Testis (tissue), 5 donors: ENCODE measurements at regions of chr1 and their contacts with region 1.

Region 1: GRCh38 chr1:225777583-225778336 is at the start of gene SRP9:
- DNase-seq: peak; percentile 99
- H3K4me3 ChIP-seq: peak within 1 kb of the TSS; percentile 87 to 89
- H3K27ac ChIP-seq: peak within 1 kb of the TSS; percentile 97 to 98
- H3K4me1 ChIP-seq: peaks cover 21% of the 10 kb centered on the region
- H3K27me3 ChIP-seq: no peaks in the 10 kb centered on the region
- CTCF ChIP-seq: peak; percentile 78 to 94 (median 90)
- POLR2A ChIP-seq: peak; percentile 57
- total RNA-seq, gene SRP9: 134 to 159 TPM

Region 2: GRCh38 chr1:225652729-225653462 is 124.9 kb before region 1 on chr1 and contains the start of gene ENAH:
- intact Hi-C with region 1: loop called (anchors 10 kb)
- DNase-seq: peak; percentile 83
- H3K4me3 ChIP-seq: peak within 1 kb of the TSS; percentile 80 to 96
- H3K27ac ChIP-seq: peak within 1 kb of the TSS; percentile 98 to 99
- H3K4me1 ChIP-seq: peaks cover 11% of the 10 kb centered on the region
- H3K27me3 ChIP-seq: no peaks in the 10 kb centered on the region
- CTCF ChIP-seq: peak in 1 of 3 experiments; percentile 6
- POLR2A ChIP-seq: no peak
- total RNA-seq, gene ENAH: 122 to 132 TPM

Region 3: GRCh38 chr1:225834417-225835329 is 56.9 kb after region 1 on chr1:
- intact Hi-C with region 1: loop called (anchors 5 kb)
- DNase-seq: peak; percentile 66
- H3K4me3 ChIP-seq: no peak overlapping the region
- H3K27ac ChIP-seq: peak overlapping the region in 1 of 2 donors; percentile 75
- H3K4me1 ChIP-seq: peaks cover 24% of the 10 kb centered on the region
- H3K27me3 ChIP-seq: no peaks in the 10 kb centered on the region
- CTCF ChIP-seq: no peak
- POLR2A ChIP-seq: no peak

Region 4: GRCh38 chr1:225977937-225978748 is 200.4 kb after region 1 on chr1:
- intact Hi-C with region 1: loop called (anchors 10 kb)
- DNase-seq: no peak
- H3K4me3 ChIP-seq: no peak overlapping the region
- H3K27ac ChIP-seq: no peak overlapping the region
- H3K4me1 ChIP-seq: no peaks in the 10 kb centered on the region
- H3K27me3 ChIP-seq: no peaks in the 10 kb centered on the region
- CTCF ChIP-seq: no peak
- POLR2A ChIP-seq: no peak